ENCODE measurements at regions of chr6 and their contacts with region 1.

Region 1: DNA sequence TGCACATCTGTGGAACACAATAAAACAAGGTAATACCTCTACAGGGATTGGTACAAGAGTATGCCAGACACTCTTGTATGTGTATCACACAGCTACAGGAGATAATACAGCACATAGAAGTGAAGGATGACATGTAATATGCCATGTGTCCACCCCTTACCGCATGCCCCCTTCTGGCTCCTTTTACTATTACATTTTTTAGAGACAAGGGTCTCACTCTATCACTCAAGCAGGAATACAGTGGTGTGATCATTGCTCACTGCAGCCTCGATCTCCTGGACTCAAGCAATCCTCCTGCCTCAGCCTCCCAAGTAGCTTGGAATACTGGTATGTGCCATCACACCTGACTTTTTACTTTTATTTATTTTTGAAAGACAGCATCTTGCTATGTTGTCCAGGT is 4.2 kb upstream of the NCR3 start:
- DNase-seq: peak; percentile 49
- H3K4me3 Mint-ChIP-seq: no peak overlapping the region
- H3K27ac Mint-ChIP-seq: no peak overlapping the region
- H3K4me1 Mint-ChIP-seq: peaks cover 53% of the 10 kb centered on the region
- H3K27me3 Mint-ChIP-seq: no peaks in the 10 kb centered on the region

Region 2: GRCh38 chr6:31529329-31530150 is 67.5 kb before region 1 on chr6:
- CTCF ChIA-PET with region 1: interaction called, 10 read pairs
- POLR2A ChIA-PET with region 1: no interaction called
- DNase-seq: no peak
- H3K4me3 Mint-ChIP-seq: no peak overlapping the region
- H3K27ac Mint-ChIP-seq: no peak overlapping the region
- H3K4me1 Mint-ChIP-seq: peaks cover 21% of the 10 kb centered on the region
- H3K27me3 Mint-ChIP-seq: no peaks in the 10 kb centered on the region

Region 3: DNA sequence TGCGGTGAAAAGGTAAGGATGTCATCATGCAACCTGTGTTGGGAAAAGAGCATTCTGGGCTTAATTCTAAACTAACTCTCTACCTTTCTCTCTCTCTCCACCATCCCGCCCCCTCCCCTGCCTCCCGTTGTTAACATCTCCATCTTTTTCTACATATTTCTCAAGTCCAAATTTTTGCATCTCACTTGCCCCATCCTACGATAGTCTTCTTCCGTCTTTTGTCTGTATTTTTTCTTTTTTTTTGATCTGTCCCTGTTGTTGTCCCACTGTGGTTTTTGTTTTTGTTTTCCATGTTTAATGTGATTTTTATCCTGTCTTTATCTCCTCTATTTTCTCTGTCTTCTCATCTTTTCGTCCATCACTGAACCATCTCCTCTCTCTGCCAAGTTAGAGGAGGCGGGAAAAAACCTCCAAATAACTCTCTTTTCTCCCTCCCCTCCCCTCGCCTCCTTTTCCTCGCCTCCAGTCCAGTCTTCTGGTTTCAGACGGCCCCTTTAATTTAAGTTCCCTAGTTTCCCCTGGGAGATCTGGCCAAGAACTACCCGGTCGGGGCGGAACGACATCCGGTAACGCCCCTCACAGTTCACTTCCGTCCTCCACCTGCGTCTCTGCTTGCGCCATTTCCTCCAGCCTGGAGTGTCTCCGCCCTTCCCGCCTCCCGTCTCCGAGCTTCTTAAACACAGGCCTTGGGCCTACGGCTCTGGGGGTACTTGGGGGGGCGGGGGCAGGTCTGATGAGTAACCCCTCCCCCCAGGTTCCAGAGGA is 49.9 kb before region 1 on chr6 and contains the start of gene NFKBIL1:
- CTCF ChIA-PET with region 1: interaction called, 751 read pairs
- POLR2A ChIA-PET with region 1: interaction called, 145 read pairs
- DNase-seq: peak; percentile 93
- H3K4me3 Mint-ChIP-seq: peak within 1 kb of the TSS; percentile 76
- H3K27ac Mint-ChIP-seq: peak within 1 kb of the TSS; percentile 69
- H3K4me1 Mint-ChIP-seq: peaks cover 62% of the 10 kb centered on the region
- H3K27me3 Mint-ChIP-seq: no peaks in the 10 kb centered on the region
- total RNA-seq, gene NFKBIL1: 22.8 to 23.6 TPM

Region 4: GRCh38 chr6:31568537-31568961 is 28.5 kb before region 1 on chr6:
- CTCF ChIA-PET with region 1: interaction called, 640 read pairs
- POLR2A ChIA-PET with region 1: interaction called, 1,578 read pairs
- DNase-seq: peak; percentile 79
- H3K4me3 Mint-ChIP-seq: peak overlapping the region; percentile 23
- H3K27ac Mint-ChIP-seq: peak overlapping the region; percentile 66
- H3K4me1 Mint-ChIP-seq: peaks cover 69% of the 10 kb centered on the region
- H3K27me3 Mint-ChIP-seq: peaks cover 41% of the 10 kb centered on the region

Region 5: DNA sequence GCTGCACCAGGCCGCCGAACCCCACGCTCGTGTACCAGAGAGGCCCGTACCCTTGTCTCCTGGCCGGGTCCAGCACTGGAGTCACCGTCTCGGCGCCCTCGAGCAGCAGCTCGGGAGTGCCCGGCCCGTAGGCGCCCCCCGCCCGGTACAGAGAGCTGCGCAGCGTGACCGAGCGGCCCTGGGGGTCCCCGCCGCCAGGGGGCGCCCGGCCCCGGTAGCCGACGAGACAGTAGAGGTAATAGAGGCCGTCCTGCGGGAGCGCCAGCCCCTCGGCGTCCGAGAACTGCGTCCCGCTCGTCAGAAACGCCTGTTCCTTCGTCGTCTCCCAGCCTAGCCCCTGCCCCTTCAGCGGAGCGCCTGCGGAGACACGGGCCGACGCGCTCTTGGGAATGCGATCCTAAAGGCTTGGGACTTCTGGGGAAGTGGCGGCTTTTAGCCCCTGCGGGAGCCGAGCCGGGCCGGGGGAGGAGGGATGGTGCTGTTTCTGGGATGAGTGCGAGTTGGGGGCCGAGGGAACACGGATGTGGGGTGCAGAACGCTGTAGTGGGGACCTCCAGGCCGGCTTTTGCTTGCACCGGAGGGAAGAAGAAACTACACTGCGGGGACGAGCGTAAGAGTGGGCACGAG is 16.1 kb before region 1 on chr6:
- CTCF ChIA-PET with region 1: interaction called, 640 read pairs
- POLR2A ChIA-PET with region 1: interaction called, 1,578 read pairs
- DNase-seq: peak; percentile 89
- H3K4me3 Mint-ChIP-seq: peak overlapping the region; percentile 91
- H3K27ac Mint-ChIP-seq: peak overlapping the region; percentile 94
- H3K4me1 Mint-ChIP-seq: peaks cover 58% of the 10 kb centered on the region
- H3K27me3 Mint-ChIP-seq: no peaks in the 10 kb centered on the region

Region 6: DNA sequence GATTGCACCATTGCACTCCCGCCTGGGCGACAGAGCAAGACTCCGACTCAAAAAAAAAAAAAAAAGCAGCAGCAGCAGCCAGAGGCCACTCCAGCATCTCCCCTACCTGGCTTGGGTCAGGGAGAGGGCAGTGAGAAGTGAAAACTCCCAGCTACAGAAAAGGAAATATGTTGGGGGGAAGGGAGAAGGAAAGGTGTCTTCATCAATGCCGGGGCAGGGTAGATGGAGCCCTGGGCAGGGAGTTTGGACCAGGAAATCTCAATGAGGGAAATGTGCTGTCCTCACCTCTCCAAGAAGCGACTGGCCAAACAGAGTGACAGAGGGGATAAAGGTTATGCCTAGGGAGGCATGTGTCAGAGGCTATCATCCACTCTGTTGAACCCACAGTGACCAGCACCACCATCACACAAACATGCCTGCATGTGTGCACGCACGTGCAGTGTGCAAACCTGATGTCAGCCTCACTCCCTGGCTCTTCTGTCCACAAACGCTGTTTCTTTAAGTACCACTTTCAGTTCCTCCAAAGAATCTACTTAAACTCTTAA is 17.1 kb after region 1 on chr6:
- CTCF ChIA-PET with region 1: interaction called, 15 read pairs
- POLR2A ChIA-PET with region 1: interaction called, 4 read pairs
- DNase-seq: no peak
- H3K4me3 Mint-ChIP-seq: no peak overlapping the region
- H3K27ac Mint-ChIP-seq: no peak overlapping the region
- H3K4me1 Mint-ChIP-seq: peaks cover 27% of the 10 kb centered on the region
- H3K27me3 Mint-ChIP-seq: peaks cover 2% of the 10 kb centered on the region

Region 7: GRCh38 chr6:31619805-31620585 is 23.0 kb after region 1 on chr6:
- CTCF ChIA-PET with region 1: interaction called, 15 read pairs
- POLR2A ChIA-PET with region 1: interaction called, 3 read pairs
- DNase-seq: peak; percentile 98
- H3K4me3 Mint-ChIP-seq: peak overlapping the region; percentile 81
- H3K27ac Mint-ChIP-seq: peak overlapping the region; percentile 95
- H3K4me1 Mint-ChIP-seq: peaks cover 50% of the 10 kb centered on the region
- H3K27me3 Mint-ChIP-seq: no peaks in the 10 kb centered on the region

Measured in activated CD4-positive, alpha-beta memory T cell treated with anti-CD3 and anti-CD28 coated beads, Interleukin-2, amount 10 ng/mL, durations not matched to agents 7 days and 5 days (primary cell).